Mammary epithelial cell (primary cell): ENCODE measurements at regions of chr3 and their contacts with region 1.

Region 1: DNA sequence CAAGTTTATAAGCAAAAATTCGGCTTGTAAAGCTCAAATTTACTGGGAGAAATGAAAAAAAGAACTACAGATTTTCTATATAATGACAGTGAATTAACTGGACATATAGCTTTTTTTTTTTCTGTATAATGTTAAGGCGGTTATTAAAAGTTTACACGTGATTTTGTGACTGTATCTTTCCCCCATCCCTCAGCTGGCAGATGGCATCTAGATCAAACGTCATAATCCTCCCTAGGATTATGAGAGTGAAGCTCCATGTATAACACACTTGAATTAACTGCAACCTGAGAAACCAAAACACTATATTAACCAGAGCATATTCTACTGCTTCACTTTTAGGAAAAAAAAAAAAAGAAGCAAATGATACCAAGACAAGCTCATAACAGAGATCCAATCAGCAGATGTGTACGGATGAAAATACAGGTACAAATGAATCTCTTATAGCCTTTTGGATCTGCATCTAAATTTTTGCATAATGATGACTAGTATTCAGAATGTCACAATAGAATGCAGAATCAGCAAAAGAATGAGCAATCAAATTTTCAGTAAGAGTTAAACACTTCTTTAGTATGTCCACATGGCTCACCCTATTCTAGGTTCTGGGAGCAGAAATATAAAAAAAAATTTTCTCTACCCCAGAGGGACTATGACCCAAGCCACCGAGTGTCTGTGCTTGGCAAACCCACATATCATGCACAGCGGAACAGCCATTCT is 12.4 kb downstream of the MOBP start:
- DNase-seq: no peak
- H3K4me3 ChIP-seq: no peak overlapping the region
- H3K27ac ChIP-seq: no peak overlapping the region
- H3K4me1 ChIP-seq: no peaks in the 10 kb centered on the region
- H3K27me3 ChIP-seq: no peaks in the 10 kb centered on the region
- CTCF ChIP-seq: no peak

Region 2: DNA sequence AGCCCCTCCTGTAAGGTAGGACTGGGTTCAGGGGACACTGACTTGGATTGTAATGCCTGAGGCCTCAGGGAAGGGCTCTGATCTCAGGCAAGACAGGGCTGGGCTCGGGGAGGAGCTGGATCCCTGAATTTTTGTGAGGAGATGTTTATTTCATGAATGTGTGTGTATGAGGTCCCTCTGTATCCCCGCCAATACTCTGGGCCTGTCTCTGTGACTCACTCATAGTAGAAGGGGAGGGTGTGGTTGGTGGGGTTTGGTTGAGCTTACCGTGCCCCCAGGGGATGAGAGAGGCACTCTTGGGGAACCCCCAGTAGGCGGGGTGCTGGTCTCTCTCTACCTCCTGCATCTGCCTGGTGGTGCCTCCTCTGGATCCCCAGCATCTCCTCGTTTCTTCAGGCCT is 45.3 kb before region 1 on chr3:
- CTCF ChIA-PET with region 1: no interaction called
- dilution Hi-C with region 1: loop called (anchors 5 kb)
- in situ Hi-C with region 1: no loop called
- intact Hi-C with region 1: no loop called
- DNase-seq: peak; percentile 83
- H3K4me3 ChIP-seq: no peak overlapping the region
- H3K27ac ChIP-seq: no peak overlapping the region
- H3K4me1 ChIP-seq: peaks cover 3% of the 10 kb centered on the region
- H3K27me3 ChIP-seq: no peaks in the 10 kb centered on the region
- CTCF ChIP-seq: no peak